Activated T-helper 2 cell treated with anti-CD3 and anti-CD28 coated beads, Interferon-gamma antibody, Interleukin-2, Interleukin-4, amounts not matched to agents 10 μg/mL and 5 μg/mL and 100 μg/mL, durations not matched to agents 14 hours and 24 hours and 36 hours (primary cell): ENCODE measurements at regions of chrX and their contacts with region 1.

Region 1: GRCh38 chrX:14029425-14030173 is at the start of gene GEMIN8:
- DNase-seq: peak; percentile 79
- H3K4me3 Mint-ChIP-seq: peak within 1 kb of the TSS; percentile 98
- H3K27ac Mint-ChIP-seq: peak within 1 kb of the TSS; percentile 98
- H3K4me1 Mint-ChIP-seq: peaks cover 22% of the 10 kb centered on the region
- H3K27me3 Mint-ChIP-seq: peaks cover 4% of the 10 kb centered on the region
- total RNA-seq, gene GEMIN8: 12.6 and 14.0 TPM in 2 replicates

Region 2: GRCh38 chrX:12894074-12895030 is 1135.2 kb before region 1 on chrX:
- intact Hi-C with region 1: loop called (anchors 5 kb)
- DNase-seq: peak; percentile 20
- H3K4me3 Mint-ChIP-seq: no peak overlapping the region
- H3K27ac Mint-ChIP-seq: no peak overlapping the region
- H3K4me1 Mint-ChIP-seq: peaks cover 43% of the 10 kb centered on the region
- H3K27me3 Mint-ChIP-seq: no peaks in the 10 kb centered on the region

Region 3: DNA sequence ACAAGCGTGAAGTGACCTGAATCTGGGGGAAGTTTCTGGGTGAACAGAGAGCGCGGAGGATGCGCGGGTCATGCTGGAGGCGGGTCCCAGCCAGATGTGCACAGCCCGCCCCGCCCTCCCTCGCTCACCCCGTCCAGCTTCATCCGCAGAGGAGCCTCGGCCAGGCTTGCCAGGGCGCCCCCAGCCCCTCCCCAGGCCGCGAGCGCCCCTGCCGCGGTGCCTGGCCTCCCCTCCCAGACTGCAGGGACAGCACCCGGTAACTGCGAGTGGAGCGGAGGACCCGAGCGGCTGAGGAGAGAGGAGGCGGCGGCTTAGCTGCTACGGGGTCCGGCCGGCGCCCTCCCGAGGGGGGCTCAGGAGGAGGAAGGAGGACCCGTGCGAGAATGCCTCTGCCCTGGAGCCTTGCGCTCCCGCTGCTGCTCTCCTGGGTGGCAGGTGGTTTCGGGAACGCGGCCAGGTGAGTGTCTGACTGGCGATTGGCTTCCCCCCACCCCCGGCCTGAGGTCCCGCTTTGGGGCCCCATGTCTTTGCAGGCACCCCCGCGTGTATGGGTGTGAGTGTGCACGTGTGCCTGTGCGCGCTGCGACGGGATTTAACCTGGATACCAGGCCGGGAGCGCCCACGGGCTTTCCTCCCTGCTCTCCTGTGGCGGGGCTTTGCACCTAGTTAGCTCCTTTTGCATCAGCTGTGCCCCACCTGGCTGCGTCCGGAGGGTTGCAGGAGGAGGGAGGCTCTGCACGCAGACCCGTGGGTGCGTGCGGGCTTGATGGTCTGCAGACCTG is 459.9 kb before region 1 on chrX and contains the start of gene EGFL6:
- intact Hi-C with region 1: loop called (anchors 5 kb)
- DNase-seq: no peak
- H3K4me3 Mint-ChIP-seq: peak within 1 kb of the TSS; percentile 69
- H3K27ac Mint-ChIP-seq: no peak within 1 kb of the TSS
- H3K4me1 Mint-ChIP-seq: peaks cover 33% of the 10 kb centered on the region
- H3K27me3 Mint-ChIP-seq: peaks cover 29% of the 10 kb centered on the region
- total RNA-seq, gene EGFL6: 2.3 and 3.4 TPM in 2 replicates

Region 4: DNA sequence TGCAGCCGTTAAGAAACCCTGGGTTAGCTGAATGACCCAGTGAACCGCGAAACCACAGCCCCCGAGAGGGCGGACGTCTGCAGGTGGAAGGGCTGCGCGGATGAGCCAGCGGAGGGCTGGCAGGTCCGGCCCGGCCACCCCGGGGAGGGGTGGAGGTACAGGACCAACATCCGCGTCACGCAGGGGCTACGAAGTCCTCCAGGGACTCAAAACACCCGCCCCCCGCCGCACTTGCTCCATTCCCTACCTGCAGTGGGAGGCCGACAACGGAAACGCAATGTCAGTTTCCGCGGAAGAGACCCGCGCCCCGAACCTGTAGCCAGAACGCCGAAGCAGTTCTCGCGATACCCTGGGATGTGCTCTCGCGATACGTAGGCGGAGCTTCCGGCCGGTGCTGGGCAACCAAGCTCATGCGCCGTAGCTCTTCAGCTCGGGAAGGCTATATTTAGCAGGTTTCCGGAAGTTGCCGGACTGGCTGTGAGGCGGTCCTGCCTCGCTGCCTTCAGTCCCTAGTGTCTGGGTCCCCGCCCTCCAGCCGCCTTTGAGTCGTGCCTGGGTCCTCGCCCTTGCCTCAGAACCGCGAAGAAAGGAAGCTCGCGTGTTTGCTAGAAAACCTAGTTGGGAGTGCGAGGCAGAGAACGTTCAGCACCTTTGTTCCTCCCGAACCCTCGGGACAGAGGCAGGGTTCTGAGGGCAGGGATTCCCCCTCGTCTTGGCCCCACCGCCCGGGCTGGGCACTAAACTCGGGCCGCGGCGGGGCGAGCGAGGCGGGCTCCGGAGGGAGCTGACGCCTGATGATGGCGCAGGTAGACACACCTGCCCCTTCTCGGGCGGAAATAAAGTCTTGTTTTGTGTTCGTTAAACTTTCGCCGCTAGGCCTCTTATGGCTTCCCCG is 295.1 kb before region 1 on chrX and contains the starts of genes OFD1 and TRAPPC2:
- intact Hi-C with region 1: loop called (anchors 5 kb)
- DNase-seq: peak; percentile 87
- H3K4me3 Mint-ChIP-seq: peak within 1 kb of the TSS; percentile 95
- H3K27ac Mint-ChIP-seq: peak within 1 kb of the TSS; percentile 96
- H3K4me1 Mint-ChIP-seq: peaks cover 39% of the 10 kb centered on the region
- H3K27me3 Mint-ChIP-seq: no peaks in the 10 kb centered on the region
- total RNA-seq, gene OFD1: 21.0 and 23.4 TPM in 2 replicates
- total RNA-seq, gene TRAPPC2: 14.7 and 15.2 TPM in 2 replicates

Region 5: GRCh38 chrX:13985697-13986435 is 43.7 kb before region 1 on chrX:
- intact Hi-C with region 1: loop called (anchors 5 kb)
- DNase-seq: no peak
- H3K4me3 Mint-ChIP-seq: no peak overlapping the region
- H3K27ac Mint-ChIP-seq: no peak overlapping the region
- H3K4me1 Mint-ChIP-seq: peaks cover 8% of the 10 kb centered on the region
- H3K27me3 Mint-ChIP-seq: peaks cover 12% of the 10 kb centered on the region

Region 6: DNA sequence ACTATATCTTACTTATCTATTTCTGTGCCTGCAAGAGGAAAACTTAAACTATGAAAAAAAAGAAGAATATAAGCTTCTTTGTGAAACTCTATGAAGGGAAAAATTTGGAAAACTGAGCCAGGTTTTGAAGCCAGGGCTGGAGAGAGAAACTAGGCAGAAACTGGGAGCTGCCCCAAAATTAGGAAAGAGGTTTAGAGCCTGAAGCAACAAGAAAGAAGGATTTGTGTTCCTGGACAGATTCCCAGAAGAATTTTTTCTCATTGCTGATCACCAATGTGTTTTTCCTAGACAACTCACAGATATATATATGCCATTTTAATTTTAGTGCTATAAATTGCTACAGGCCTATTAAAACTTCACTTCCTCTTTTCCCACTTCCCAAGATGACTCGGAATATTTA is 245.1 kb after region 1 on chrX:
- intact Hi-C with region 1: no loop called
- DNase-seq: no peak
- H3K4me3 Mint-ChIP-seq: no peak overlapping the region
- H3K27ac Mint-ChIP-seq: no peak overlapping the region
- H3K4me1 Mint-ChIP-seq: no peaks in the 10 kb centered on the region
- H3K27me3 Mint-ChIP-seq: no peaks in the 10 kb centered on the region

Region 7: GRCh38 chrX:15335135-15336022 is 1305.8 kb after region 1 on chrX and contains the start of gene PIGA:
- intact Hi-C with region 1: loop called (anchors 5 kb)
- DNase-seq: peak; percentile 90
- H3K4me3 Mint-ChIP-seq: peak within 1 kb of the TSS; percentile 89
- H3K27ac Mint-ChIP-seq: peak within 1 kb of the TSS; percentile 89
- H3K4me1 Mint-ChIP-seq: peaks cover 12% of the 10 kb centered on the region
- H3K27me3 Mint-ChIP-seq: peaks cover 6% of the 10 kb centered on the region
- total RNA-seq, gene PIGA: 40.6 and 43.3 TPM in 2 replicates